ENCODE measurements at regions of chr17 and their contacts with region 1.

Region 1: DNA sequence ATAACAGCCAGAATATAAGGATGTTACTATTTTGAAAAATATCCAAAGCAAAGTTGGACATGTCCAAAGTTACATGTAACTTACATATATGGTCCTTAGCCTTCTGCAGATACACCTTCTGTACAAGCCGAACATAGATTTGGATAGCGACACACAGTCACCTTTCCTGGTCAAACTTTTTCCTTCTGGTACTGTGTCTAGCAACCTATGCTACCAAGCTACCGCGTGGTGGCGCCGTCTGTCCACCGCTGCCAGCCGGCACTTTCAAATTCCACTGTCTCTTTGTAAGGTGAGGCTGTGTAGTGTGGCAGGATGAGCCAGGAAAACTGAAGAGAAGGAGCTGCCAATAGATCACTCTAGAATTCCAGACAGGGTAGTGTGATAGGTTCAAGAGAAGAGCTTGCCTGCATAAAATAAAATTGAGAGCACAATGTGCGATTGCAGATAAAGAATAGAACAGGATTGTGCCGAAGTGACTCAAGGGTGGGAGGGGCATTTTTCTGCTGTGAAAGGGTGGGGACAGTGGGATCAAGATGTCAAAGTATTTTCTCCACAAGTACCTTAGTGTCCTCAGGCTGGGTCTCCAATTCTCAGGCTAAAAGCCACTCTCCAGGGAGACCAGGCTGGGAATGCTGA is 366.9 kb downstream of the SLC39A11 start:
- DNase-seq: peak in 4 of 5 donors; percentile 8 to 51 (median 19)
- H3K4me3 ChIP-seq: no peak overlapping the region
- H3K4me3 Mint-ChIP-seq: peak overlapping the region in 5 of 7 donors; percentile 3 to 74 (median 45)
- H3K27ac ChIP-seq: no peak overlapping the region
- H3K27ac Mint-ChIP-seq: peak overlapping the region in 7 of 8 donors; percentile 5 to 84 (median 15)
- H3K4me1 ChIP-seq: peaks cover 29% of the 10 kb centered on the region
- H3K4me1 Mint-ChIP-seq: peaks cover 26 to 38% (median 31%) of the 10 kb centered on the region in 3 donors
- H3K27me3 ChIP-seq: no peaks in the 10 kb centered on the region
- H3K27me3 Mint-ChIP-seq: no peaks in the 10 kb centered on the region

Region 2: DNA sequence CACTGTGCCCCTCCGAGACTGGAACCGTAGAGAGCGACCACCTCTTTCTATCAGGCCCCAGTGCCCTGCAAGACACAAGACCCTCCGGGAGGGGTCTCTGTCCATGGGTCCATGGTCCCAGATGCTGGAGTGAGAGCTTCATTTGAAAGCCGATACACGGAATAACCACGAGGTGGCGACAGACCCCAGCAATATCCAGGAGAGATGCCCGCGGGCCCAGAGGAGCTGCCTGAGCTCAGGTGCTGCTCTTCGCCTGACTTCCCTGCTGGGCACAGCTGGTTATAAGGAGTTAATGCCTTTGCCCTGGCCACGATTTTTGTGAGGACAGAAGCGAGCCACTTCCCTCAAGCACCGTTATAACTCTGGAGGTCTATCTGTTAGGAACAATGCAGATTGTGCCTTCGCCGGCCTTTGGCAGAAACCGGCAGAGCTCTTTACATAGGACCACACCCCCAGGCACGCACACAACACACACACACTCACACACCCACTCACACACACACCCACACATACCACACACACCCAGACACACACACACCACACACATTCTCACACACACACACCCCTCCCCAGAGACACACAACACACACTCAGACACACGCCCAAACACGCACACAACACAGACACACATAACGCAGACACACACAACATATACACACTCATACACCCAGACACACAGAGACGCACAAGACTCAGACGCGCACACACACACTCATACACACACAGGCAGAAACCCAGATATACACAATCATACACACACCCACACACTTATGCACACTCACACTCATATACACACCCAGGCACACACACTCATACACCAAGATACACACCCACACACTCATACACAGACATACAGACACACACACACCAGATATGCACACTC is 168.4 kb before region 1 on chr17:
- CTCF ChIA-PET with region 1: interaction called, 30 read pairs
- POLR2A ChIA-PET with region 1: no interaction called
- DNase-seq: peak in 3 of 5 donors; percentile 23 to 59 (median 33)
- H3K4me3 ChIP-seq: no peak overlapping the region
- H3K4me3 Mint-ChIP-seq: no peak overlapping the region
- H3K27ac ChIP-seq: no peak overlapping the region
- H3K27ac Mint-ChIP-seq: no peak overlapping the region
- H3K4me1 ChIP-seq: no peaks in the 10 kb centered on the region
- H3K4me1 Mint-ChIP-seq: no peaks in the 10 kb centered on the region
- H3K27me3 ChIP-seq: no peaks in the 10 kb centered on the region
- H3K27me3 Mint-ChIP-seq: peaks cover 0 to 5% of the 10 kb centered on the region in 2 donors

Region 3: DNA sequence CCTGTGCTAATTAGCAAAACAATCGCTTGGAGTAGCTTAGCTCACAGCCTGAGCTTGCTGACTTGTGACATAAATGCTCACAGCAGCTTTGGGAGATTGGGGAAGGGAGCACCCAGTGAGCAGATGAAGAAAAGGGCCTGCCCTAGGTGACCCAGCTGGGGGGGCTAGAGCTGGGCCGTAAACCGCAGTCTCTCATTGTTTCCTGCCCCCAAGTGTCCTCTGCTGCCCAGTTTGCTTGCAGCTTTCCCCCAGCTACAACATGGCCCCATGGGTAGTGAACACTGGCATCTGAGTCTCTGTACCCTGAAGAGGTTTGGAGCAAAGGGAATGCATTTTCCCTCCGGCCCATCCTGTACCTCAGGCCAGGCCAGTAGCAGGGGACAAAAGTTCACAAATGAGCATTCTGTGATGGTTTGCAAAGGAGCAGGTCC is 17.5 kb after region 1 on chr17:
- CTCF ChIA-PET with region 1: interaction called, 11 read pairs
- POLR2A ChIA-PET with region 1: no interaction called
- DNase-seq: no peak
- H3K4me3 ChIP-seq: no peak overlapping the region
- H3K4me3 Mint-ChIP-seq: no peak overlapping the region
- H3K27ac ChIP-seq: no peak overlapping the region
- H3K27ac Mint-ChIP-seq: no peak overlapping the region
- H3K4me1 ChIP-seq: no peaks in the 10 kb centered on the region
- H3K4me1 Mint-ChIP-seq: no peaks in the 10 kb centered on the region
- H3K27me3 ChIP-seq: no peaks in the 10 kb centered on the region
- H3K27me3 Mint-ChIP-seq: peaks cover 0 to 1% of the 10 kb centered on the region in 2 donors

Region 4: GRCh38 chr17:73156166-73156840 is 430.8 kb after region 1 on chr17:
- CTCF ChIA-PET with region 1: interaction called, 45 read pairs
- POLR2A ChIA-PET with region 1: no interaction called
- DNase-seq: peak; percentile 21 to 58 (median 32)
- H3K4me3 ChIP-seq: no peak overlapping the region
- H3K4me3 Mint-ChIP-seq: peak overlapping the region in 1 of 7 donors; percentile 75
- H3K27ac ChIP-seq: no peak overlapping the region
- H3K27ac Mint-ChIP-seq: peak overlapping the region in 1 of 8 donors; percentile 73
- H3K4me1 ChIP-seq: no peaks in the 10 kb centered on the region
- H3K4me1 Mint-ChIP-seq: peaks cover 2 to 13% (median 4%) of the 10 kb centered on the region in 3 donors
- H3K27me3 ChIP-seq: no peaks in the 10 kb centered on the region
- H3K27me3 Mint-ChIP-seq: peaks cover 19 to 30% of the 10 kb centered on the region in 2 donors

Region 5: DNA sequence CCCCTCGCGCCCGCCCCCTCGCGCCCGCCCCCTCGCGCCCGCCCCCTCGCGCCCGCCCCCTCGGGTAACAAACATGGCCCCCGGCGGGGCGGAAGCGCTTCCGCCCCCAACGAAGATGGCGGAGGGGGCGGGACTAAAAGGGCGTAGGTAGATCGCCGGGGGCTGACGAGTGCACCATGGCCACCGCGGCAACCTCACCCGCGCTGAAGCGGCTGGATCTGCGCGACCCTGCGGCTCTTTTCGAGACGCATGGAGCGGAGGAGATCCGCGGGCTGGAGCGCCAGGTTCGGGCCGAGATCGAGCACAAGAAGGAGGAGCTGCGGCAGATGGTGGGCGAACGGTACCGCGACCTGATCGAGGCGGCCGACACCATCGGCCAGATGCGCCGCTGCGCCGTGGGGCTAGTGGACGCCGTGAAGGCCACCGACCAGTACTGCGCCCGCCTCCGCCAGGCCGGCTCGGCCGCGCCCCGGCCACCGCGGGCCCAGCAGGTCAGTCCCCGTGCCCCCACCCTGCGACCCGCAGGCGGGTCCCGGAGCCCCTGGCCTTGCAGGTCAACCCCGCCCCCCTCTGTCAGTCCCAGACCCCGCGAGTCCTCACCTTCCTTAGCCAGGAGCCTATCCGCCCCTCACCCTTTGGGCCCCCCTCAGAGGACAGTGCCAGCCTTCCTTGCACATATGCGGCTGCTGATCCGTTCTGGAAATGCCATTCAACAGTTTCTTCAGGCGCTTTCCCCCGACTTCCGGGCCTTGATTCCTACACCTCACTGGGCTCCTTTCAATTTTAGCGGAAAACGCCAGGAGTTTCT is 467.5 kb after region 1 on chr17 and contains the start of gene COG1:
- CTCF ChIA-PET with region 1: interaction called, 40 read pairs
- POLR2A ChIA-PET with region 1: interaction called, 3 read pairs
- DNase-seq: peak; percentile 73 to 92 (median 78)
- H3K4me3 ChIP-seq: peak within 1 kb of the TSS; percentile 87
- H3K4me3 Mint-ChIP-seq: peak within 1 kb of the TSS; percentile 91 to 99 (median 98)
- H3K27ac ChIP-seq: peak within 1 kb of the TSS; percentile 95
- H3K27ac Mint-ChIP-seq: peak within 1 kb of the TSS; percentile 92 to 98 (median 97)
- H3K4me1 ChIP-seq: peaks cover 16% of the 10 kb centered on the region
- H3K4me1 Mint-ChIP-seq: peaks cover 26 to 46% (median 34%) of the 10 kb centered on the region in 3 donors
- H3K27me3 ChIP-seq: no peaks in the 10 kb centered on the region
- H3K27me3 Mint-ChIP-seq: no peaks in the 10 kb centered on the region
- total RNA-seq, gene COG1: 24.6 to 26.5 TPM

Region 6: DNA sequence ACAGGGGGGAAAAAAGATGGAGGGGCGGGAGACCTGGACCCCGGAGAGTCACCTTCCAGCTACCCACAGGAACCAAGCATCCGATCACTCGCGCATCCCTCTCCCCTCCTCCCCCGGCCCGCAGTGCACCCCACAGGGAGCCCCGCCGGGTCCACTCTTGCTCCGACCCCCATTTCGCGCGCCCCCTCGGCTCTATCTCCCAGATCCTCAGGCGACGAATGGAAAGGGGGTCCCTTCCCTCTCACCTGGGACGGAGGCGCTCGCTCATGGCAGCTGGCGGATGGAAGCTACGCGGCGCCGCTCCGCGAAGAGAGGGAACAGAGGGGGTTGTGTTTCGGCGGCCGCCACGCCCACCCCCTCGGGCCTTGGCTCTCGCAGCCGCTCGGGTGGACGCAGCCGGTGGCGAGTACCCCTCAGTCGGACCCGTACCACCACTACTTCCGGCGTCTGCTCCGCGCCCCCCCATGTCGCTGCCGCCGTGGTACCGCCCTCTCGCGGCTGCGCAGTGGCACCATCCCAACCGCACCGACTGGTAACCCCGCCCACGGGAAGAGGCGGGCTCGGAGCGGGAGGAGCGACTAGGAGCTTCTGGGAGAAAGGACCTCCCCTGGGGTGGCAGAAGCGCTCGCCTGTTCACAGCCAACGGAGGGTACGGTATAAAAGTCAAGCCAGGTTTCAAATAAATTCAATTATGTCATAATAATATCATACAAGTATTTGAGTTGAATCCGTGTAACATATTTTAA is 506.5 kb after region 1 on chr17:
- CTCF ChIA-PET with region 1: interaction called, 10 read pairs
- POLR2A ChIA-PET with region 1: interaction called, 3 read pairs
- DNase-seq: peak; percentile 94 to 97 (median 95)
- H3K4me3 ChIP-seq: peak overlapping the region; percentile 87
- H3K4me3 Mint-ChIP-seq: peak overlapping the region; percentile 95 to 97 (median 96)
- H3K27ac ChIP-seq: peak overlapping the region; percentile 80
- H3K27ac Mint-ChIP-seq: peak overlapping the region; percentile 82 to 99 (median 97)
- H3K4me1 ChIP-seq: peaks cover 53% of the 10 kb centered on the region
- H3K4me1 Mint-ChIP-seq: peaks cover 62 to 83% (median 73%) of the 10 kb centered on the region in 3 donors
- H3K27me3 ChIP-seq: no peaks in the 10 kb centered on the region
- H3K27me3 Mint-ChIP-seq: no peaks in the 10 kb centered on the region

Region 7: DNA sequence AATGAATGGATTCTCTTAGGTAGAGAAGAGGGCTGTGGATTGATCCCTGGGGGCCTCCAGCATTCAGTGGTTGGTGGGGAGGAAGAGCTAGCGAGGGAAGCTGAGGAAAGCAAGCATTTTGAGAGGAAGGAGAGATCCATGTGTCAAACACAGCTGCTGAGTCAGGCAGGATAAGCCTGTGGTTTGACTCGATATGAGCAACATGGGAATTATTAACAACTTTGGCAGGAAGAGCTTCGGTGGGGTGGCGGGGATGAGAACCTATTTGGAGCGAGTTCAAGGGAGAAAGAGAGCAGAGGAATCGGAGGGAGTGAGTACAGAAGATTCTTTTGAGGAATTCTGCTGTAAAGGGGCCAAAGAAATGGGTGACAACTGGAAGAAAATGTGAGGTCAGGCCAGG is 645.7 kb after region 1 on chr17:
- CTCF ChIA-PET with region 1: interaction called, 78 read pairs
- POLR2A ChIA-PET with region 1: interaction called, 3 read pairs
- DNase-seq: no peak
- H3K4me3 ChIP-seq: no peak overlapping the region
- H3K4me3 Mint-ChIP-seq: no peak overlapping the region
- H3K27ac ChIP-seq: no peak overlapping the region
- H3K27ac Mint-ChIP-seq: no peak overlapping the region
- H3K4me1 ChIP-seq: no peaks in the 10 kb centered on the region
- H3K4me1 Mint-ChIP-seq: no peaks in the 10 kb centered on the region
- H3K27me3 ChIP-seq: no peaks in the 10 kb centered on the region
- H3K27me3 Mint-ChIP-seq: peaks cover 7 to 9% of the 10 kb centered on the region in 2 donors

Measured in CD8-positive, alpha-beta memory T cell (primary cell).